Activated B cell treated with CpG ODN at 0.5 μM for 24 hours (primary cell): ENCODE measurements at regions of chr15 and their contacts with region 1.

Region 1: GRCh38 chr15:41291065-41291631 is 41.2 kb downstream of the OIP5 start:
- DNase-seq: peak; percentile 25
- ATAC-seq: peak; percentile 94
- H3K4me3 Mint-ChIP-seq: peak overlapping the region; percentile 57
- H3K27ac Mint-ChIP-seq: peak overlapping the region; percentile 89
- H3K4me1 Mint-ChIP-seq: peaks cover 40% of the 10 kb centered on the region
- H3K27me3 Mint-ChIP-seq: no peaks in the 10 kb centered on the region
- CTCF ChIP-seq: no peak

Region 2: GRCh38 chr15:39961051-39961450 is 1330.1 kb before region 1 on chr15:
- CTCF ChIA-PET with region 1: no interaction called
- POLR2A ChIA-PET with region 1: no interaction called
- intact Hi-C with region 1: no loop called
- DNase-seq: no peak
- ATAC-seq: no peak
- H3K4me3 Mint-ChIP-seq: no peak overlapping the region
- H3K27ac Mint-ChIP-seq: no peak overlapping the region
- H3K4me1 Mint-ChIP-seq: no peaks in the 10 kb centered on the region
- H3K27me3 Mint-ChIP-seq: no peaks in the 10 kb centered on the region
- CTCF ChIP-seq: no peak

Region 3: GRCh38 chr15:41307679-41308078 is 16.5 kb after region 1 on chr15:
- CTCF ChIA-PET with region 1: no interaction called
- POLR2A ChIA-PET with region 1: interaction called, 3 read pairs
- intact Hi-C with region 1: loop called (anchors 2 kb)
- DNase-seq: no peak
- ATAC-seq: no peak
- H3K4me3 Mint-ChIP-seq: no peak overlapping the region
- H3K27ac Mint-ChIP-seq: no peak overlapping the region
- H3K4me1 Mint-ChIP-seq: peaks cover 14% of the 10 kb centered on the region
- H3K27me3 Mint-ChIP-seq: no peaks in the 10 kb centered on the region
- CTCF ChIP-seq: no peak